ENCODE measurements at regions of chr12 and their contacts with region 1.

Region 1: GRCh38 chr12:101809208-101809607 is 21.6 kb downstream of the GNPTAB start:
- DNase-seq: no peak
- ATAC-seq: no peak
- H3K4me3 ChIP-seq: no peak overlapping the region
- H3K4me3 Mint-ChIP-seq: no peak overlapping the region
- H3K27ac ChIP-seq: no peak overlapping the region
- H3K27ac Mint-ChIP-seq: no peak overlapping the region
- H3K4me1 ChIP-seq: no peaks in the 10 kb centered on the region
- H3K4me1 Mint-ChIP-seq: peaks cover 19 to 64% (median 46%) of the 10 kb centered on the region in 7 donors
- H3K27me3 ChIP-seq: no peaks in the 10 kb centered on the region
- H3K27me3 Mint-ChIP-seq: no peaks in the 10 kb centered on the region

Region 2: DNA sequence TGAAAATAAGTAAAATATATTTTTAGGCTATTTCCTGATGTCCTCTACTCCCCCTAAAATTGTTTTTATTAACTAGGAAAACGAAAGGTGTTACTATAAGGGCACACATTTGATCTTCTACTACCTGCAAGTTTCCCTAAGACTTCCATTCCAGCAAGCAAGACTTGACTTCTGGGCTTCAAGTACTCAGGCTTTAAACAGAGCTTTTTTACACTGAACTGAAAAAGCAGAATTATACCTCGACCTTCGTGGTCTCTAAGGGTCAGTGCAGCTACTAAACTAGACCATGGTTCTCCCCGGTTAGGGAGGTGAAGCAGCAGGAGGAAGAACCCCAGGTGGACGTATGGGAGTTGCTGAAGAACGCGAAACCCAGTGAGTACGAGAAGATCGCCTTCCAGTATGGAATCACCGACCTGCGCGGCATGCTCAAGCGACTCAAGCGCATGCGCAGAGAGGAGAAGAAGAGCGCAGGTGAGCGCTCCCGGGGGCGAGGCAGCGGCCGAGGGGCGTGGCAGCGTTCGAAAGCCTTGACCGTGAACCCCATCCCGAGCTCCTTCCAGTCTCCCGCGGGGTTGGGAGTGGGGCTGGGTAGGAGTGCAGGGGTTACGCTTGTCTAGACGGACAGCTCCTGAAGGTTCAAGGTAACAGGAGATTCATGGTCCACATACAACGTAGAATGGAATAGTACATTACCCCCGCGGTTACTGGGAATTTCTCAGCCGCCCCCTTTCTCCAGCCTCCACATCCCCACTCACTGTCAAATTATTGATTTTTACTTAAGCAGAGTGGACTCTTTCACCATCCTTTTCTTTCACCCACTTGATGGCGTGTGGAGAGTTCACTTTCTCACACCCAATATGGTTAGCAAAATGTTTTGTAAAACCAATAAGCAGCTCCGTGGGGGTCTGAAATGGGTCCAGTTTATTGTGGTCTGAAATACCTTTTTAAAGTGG is 166.8 kb before region 1 on chr12:
- CTCF ChIA-PET with region 1: no interaction called
- POLR2A ChIA-PET with region 1: no interaction called
- intact Hi-C with region 1: no loop called
- DNase-seq: peak in 4 of 9 donors; percentile 1 to 15 (median 8)
- ATAC-seq: no peak
- H3K4me3 ChIP-seq: no peak overlapping the region
- H3K4me3 Mint-ChIP-seq: peak overlapping the region in 9 of 10 donors; percentile 36 to 80 (median 59)
- H3K27ac ChIP-seq: no peak overlapping the region
- H3K27ac Mint-ChIP-seq: no peak overlapping the region
- H3K4me1 ChIP-seq: no peaks in the 10 kb centered on the region
- H3K4me1 Mint-ChIP-seq: peaks cover 0 to 8% (median 5%) of the 10 kb centered on the region in 7 donors
- H3K27me3 ChIP-seq: peaks cover 0 to 8% of the 10 kb centered on the region in 2 donors
- H3K27me3 Mint-ChIP-seq: peaks cover 23 to 47% (median 27%) of the 10 kb centered on the region in 5 donors

Region 3: GRCh38 chr12:101759396-101760047 is 49.7 kb before region 1 on chr12:
- CTCF ChIA-PET with region 1: no interaction called
- POLR2A ChIA-PET with region 1: no interaction called
- intact Hi-C with region 1: no loop called
- DNase-seq: peak in 6 of 9 donors; percentile 16 to 41 (median 32)
- ATAC-seq: peak; percentile 73
- H3K4me3 ChIP-seq: no peak overlapping the region
- H3K4me3 Mint-ChIP-seq: no peak overlapping the region
- H3K27ac ChIP-seq: no peak overlapping the region
- H3K27ac Mint-ChIP-seq: no peak overlapping the region
- H3K4me1 ChIP-seq: no peaks in the 10 kb centered on the region
- H3K4me1 Mint-ChIP-seq: peaks cover 0 to 4% (median 2%) of the 10 kb centered on the region in 7 donors
- H3K27me3 ChIP-seq: no peaks in the 10 kb centered on the region
- H3K27me3 Mint-ChIP-seq: no peaks in the 10 kb centered on the region

Region 4: DNA sequence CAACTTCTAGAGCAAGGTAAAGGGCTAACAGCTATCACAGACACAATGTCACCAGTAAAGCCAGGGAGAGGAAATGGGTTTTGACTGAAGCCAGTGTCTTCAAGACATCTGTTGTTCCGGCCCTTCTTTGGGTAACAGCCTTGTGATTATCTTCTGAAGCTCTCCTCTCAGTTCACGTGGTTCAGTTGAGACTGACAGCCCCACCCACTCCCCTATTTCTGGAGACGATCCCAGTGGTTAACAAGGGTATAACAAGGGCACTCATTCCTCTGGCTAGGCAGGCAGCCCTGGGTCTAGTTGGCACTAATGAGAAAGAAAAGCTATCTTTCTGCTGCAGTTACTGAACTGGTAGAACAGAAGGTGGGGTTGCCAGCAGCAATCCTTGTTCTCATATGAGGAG is 14.7 kb after region 1 on chr12:
- CTCF ChIA-PET with region 1: no interaction called
- POLR2A ChIA-PET with region 1: no interaction called
- intact Hi-C with region 1: loop called in 1 of 2 experiments (anchors 2 kb)
- DNase-seq: peak; percentile 28 to 87 (median 82)
- ATAC-seq: peak; percentile 100
- H3K4me3 ChIP-seq: no peak overlapping the region
- H3K4me3 Mint-ChIP-seq: peak overlapping the region; percentile 15 to 84 (median 64)
- H3K27ac ChIP-seq: no peak overlapping the region
- H3K27ac Mint-ChIP-seq: peak overlapping the region; percentile 33 to 97 (median 85)
- H3K4me1 ChIP-seq: peaks cover 5 to 24% of the 10 kb centered on the region in 2 donors
- H3K4me1 Mint-ChIP-seq: peaks cover 41 to 81% (median 78%) of the 10 kb centered on the region in 7 donors
- H3K27me3 ChIP-seq: no peaks in the 10 kb centered on the region
- H3K27me3 Mint-ChIP-seq: no peaks in the 10 kb centered on the region

Measured in naive thymus-derived CD4-positive, alpha-beta T cell (primary cell).